ENCODE measurements at regions of chr22 and their contacts with region 1.

Region 1: DNA sequence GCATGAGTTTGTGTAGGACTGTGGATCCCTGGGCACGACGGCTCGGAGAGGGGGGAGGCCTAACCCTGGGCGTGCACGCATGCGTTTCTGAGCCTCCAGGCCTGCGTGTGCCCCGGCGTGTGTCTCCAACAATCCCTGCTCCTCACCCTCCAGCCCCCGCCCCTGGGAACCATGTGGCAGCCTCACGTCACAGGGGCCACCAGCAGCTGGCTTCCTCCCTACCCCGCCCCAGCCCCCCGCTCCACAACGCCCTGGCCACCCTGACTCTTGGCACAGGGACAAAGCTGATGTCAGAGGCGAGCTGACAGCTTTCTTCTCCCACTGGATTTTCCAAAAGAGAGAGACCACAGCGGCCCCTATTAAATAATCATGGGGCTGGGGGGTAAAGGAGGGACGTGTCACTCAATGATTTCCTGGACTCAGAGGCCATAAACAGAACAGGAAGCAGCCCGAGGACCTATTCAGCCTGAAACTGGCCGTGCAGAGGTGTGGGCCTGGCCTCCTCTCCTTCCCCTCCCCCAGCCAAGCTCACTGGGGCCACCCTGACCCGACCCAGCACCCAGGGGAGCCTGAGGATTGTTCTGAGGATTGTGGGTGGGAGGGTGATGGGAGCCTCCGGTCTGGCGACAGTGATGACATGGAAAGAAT is 6.8 kb upstream of the LIF start:
- DNase-seq: no peak
- ATAC-seq: no peak
- H3K4me3 Mint-ChIP-seq: no peak overlapping the region
- H3K27ac Mint-ChIP-seq: no peak overlapping the region
- H3K4me1 Mint-ChIP-seq: peaks cover 5% of the 10 kb centered on the region
- H3K27me3 Mint-ChIP-seq: peaks cover 17% of the 10 kb centered on the region
- CTCF ChIP-seq: no peak

Region 2: DNA sequence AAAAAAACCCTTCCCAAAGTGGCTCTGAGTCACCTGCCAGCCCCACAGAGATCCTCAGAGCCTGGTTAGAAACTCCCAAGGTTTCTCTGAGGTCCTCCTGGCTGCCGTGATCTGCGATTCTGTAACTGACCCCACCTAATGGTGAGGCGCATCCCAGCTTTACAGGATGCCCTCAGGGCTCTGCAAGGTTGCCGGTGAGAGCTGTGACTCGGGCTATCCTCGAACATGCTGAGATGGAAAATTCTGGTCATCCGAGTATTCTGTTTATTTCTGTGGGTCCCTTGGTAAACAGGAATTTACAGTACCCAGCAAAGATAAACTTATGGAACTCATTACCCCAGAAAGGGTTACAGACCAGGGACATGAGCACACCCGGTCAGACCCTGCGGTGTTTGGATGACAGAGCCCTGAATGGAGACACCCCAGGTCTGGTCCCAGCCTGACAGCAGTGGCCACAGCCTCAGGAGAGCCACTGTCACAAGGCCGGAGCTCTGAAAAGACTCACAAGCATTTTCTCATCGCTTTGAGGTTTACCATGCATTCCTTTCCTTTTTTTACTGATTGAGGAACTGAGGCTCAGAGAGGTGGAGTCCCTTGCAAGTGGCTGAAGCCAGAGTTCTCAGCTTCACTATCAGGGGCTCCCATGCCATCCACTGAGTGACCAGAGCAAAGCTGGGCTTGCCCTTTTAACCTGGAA is 29.0 kb before region 1 on chr22:
- CTCF ChIA-PET with region 1: no interaction called
- POLR2A ChIA-PET with region 1: no interaction called
- intact Hi-C with region 1: no loop called
- DNase-seq: no peak
- ATAC-seq: no peak
- H3K4me3 Mint-ChIP-seq: no peak overlapping the region
- H3K27ac Mint-ChIP-seq: no peak overlapping the region
- H3K4me1 Mint-ChIP-seq: peaks cover 20% of the 10 kb centered on the region
- H3K27me3 Mint-ChIP-seq: peaks cover 10% of the 10 kb centered on the region
- CTCF ChIP-seq: no peak

Region 3: DNA sequence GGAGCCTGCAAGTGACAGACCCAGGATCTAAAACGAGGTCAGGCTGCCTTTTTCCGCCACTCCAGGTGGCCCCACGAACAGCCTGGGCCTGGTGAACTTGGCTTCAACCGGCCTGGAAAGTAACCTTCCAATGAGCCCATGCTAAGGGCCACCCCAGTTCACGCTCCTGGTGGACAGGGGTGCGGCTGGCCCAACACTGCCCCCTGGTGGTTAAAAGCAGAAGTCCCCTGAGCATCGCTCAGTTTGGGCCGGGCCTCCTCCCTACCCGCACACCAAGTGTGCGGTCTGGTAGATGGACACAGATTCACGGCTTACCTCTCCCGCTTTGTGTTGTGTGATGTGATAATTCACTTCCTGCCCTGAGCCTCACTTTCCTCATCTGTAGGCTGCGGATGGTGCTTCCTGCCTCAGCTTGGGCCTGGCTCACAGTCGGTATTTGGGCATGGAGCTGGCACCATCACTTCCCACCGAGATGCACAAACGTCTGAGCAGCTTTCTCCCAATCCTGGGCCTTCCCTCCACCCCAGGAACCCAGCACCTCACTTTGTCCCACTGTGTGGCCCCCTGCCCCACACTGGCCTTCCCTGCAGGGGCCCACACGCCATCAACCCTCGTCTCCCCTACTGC is 232.1 kb after region 1 on chr22:
- CTCF ChIA-PET with region 1: no interaction called
- POLR2A ChIA-PET with region 1: no interaction called
- intact Hi-C with region 1: loop called (anchors 1 kb)
- DNase-seq: peak; percentile 66
- ATAC-seq: peak; percentile 93
- H3K4me3 Mint-ChIP-seq: no peak overlapping the region
- H3K27ac Mint-ChIP-seq: no peak overlapping the region
- H3K4me1 Mint-ChIP-seq: no peaks in the 10 kb centered on the region
- H3K27me3 Mint-ChIP-seq: peaks cover 9% of the 10 kb centered on the region
- CTCF ChIP-seq: peak; percentile 31

Region 4: GRCh38 chr22:31345331-31346254 is 1092.3 kb after region 1 on chr22:
- CTCF ChIA-PET with region 1: no interaction called
- POLR2A ChIA-PET with region 1: no interaction called
- intact Hi-C with region 1: no loop called
- DNase-seq: peak; percentile 89
- ATAC-seq: peak; percentile 58
- H3K4me3 Mint-ChIP-seq: peak overlapping the region; percentile 83
- H3K27ac Mint-ChIP-seq: peak overlapping the region; percentile 80
- H3K4me1 Mint-ChIP-seq: peaks cover 50% of the 10 kb centered on the region
- H3K27me3 Mint-ChIP-seq: no peaks in the 10 kb centered on the region
- CTCF ChIP-seq: peak; percentile 56

Measured in activated B cell treated with CpG ODN at 0.5 μM for 24 hours (primary cell).